ENCODE measurements at regions of chr13 and their contacts with region 1.

Region 1: GRCh38 chr13:30306762-30307193 is 573 bp downstream of the KATNAL1 start:
- DNase-seq: peak; percentile 80 to 94 (median 92)
- ATAC-seq: peak; percentile 86
- H3K4me3 ChIP-seq: peak overlapping the region; percentile 79 to 97
- H3K4me3 Mint-ChIP-seq: peak overlapping the region; percentile 89
- H3K27ac ChIP-seq: peak overlapping the region; percentile 56 to 60
- H3K27ac Mint-ChIP-seq: peak overlapping the region; percentile 79
- H3K4me1 ChIP-seq: peaks cover 5% of the 10 kb centered on the region
- H3K4me1 Mint-ChIP-seq: peaks cover 8% of the 10 kb centered on the region
- H3K27me3 ChIP-seq: no peaks in the 10 kb centered on the region
- H3K27me3 Mint-ChIP-seq: no peaks in the 10 kb centered on the region
- CTCF ChIP-seq: no peak

Region 2: GRCh38 chr13:29589234-29589633 is 717.5 kb before region 1 on chr13:
- CTCF ChIA-PET with region 1: no interaction called
- POLR2A ChIA-PET with region 1: no interaction called
- intact Hi-C with region 1: loop called (anchors 2 to 5 kb)
- DNase-seq: no peak
- ATAC-seq: no peak
- H3K4me3 ChIP-seq: no peak overlapping the region
- H3K4me3 Mint-ChIP-seq: no peak overlapping the region
- H3K27ac ChIP-seq: no peak overlapping the region
- H3K27ac Mint-ChIP-seq: no peak overlapping the region
- H3K4me1 ChIP-seq: peaks cover 7% of the 10 kb centered on the region
- H3K4me1 Mint-ChIP-seq: peaks cover 54% of the 10 kb centered on the region
- H3K27me3 ChIP-seq: no peaks in the 10 kb centered on the region
- H3K27me3 Mint-ChIP-seq: no peaks in the 10 kb centered on the region
- CTCF ChIP-seq: no peak

Region 3: DNA sequence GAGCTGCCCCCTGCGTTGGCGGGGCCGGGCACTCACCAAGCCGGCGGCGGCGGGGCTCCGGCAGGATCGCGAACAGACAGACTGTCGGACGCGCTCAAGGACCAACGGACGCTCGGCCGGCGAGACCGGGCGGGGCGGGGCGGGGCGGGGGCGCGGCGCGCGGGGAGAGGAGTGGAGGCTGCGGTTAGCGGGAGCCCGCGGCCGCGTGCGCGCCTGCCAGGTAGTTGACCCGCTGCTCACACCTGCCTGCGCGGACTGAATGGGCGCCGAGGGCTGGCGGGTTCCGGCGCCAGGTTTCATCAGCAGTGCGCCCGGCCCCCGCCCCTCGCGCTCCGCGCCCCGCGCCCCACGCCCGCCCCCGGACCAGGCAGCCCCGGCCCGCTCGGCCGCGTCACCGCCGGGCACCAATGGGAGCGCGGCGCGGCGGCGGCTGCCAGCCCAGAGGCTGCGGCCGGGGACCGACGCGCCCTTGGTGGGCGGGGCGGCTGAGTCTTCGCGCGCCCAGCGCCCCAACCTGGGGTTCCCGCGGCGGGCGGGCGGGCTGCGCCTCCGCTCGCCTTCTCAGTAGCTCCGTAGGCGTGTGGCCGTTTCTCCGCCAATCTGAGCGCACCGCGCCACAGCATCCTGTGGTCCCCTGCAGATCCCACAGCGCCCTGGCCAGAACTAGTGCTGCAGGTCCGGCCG is 711.3 kb before region 1 on chr13 and contains the start of gene SLC7A1:
- CTCF ChIA-PET with region 1: no interaction called
- POLR2A ChIA-PET with region 1: no interaction called
- intact Hi-C with region 1: loop called in 1 of 2 experiments (anchors 2 kb)
- DNase-seq: peak; percentile 67 to 93 (median 79)
- ATAC-seq: peak; percentile 88
- H3K4me3 ChIP-seq: peak within 1 kb of the TSS; percentile 61 to 74
- H3K4me3 Mint-ChIP-seq: peak within 1 kb of the TSS; percentile 90
- H3K27ac ChIP-seq: peak within 1 kb of the TSS; percentile 63 to 73
- H3K27ac Mint-ChIP-seq: peak within 1 kb of the TSS; percentile 85
- H3K4me1 ChIP-seq: peaks cover 15% of the 10 kb centered on the region
- H3K4me1 Mint-ChIP-seq: peaks cover 36% of the 10 kb centered on the region
- H3K27me3 ChIP-seq: no peaks in the 10 kb centered on the region
- H3K27me3 Mint-ChIP-seq: no peaks in the 10 kb centered on the region
- CTCF ChIP-seq: no peak
- total RNA-seq, gene SLC7A1: 15.2 to 18.4 TPM

Region 4: GRCh38 chr13:30346153-30346788 is 39.5 kb after region 1 on chr13:
- CTCF ChIA-PET with region 1: interaction called, 3 read pairs
- POLR2A ChIA-PET with region 1: interaction called, 4 read pairs
- intact Hi-C with region 1: loop called in 1 of 2 experiments (anchors 2 kb)
- DNase-seq: peak; percentile 38 to 84 (median 65)
- ATAC-seq: peak; percentile 92
- H3K4me3 ChIP-seq: no peak overlapping the region
- H3K4me3 Mint-ChIP-seq: peak overlapping the region; percentile 38
- H3K27ac ChIP-seq: no peak overlapping the region
- H3K27ac Mint-ChIP-seq: peak overlapping the region; percentile 7
- H3K4me1 ChIP-seq: peaks cover 37% of the 10 kb centered on the region
- H3K4me1 Mint-ChIP-seq: peaks cover 40% of the 10 kb centered on the region
- H3K27me3 ChIP-seq: no peaks in the 10 kb centered on the region
- H3K27me3 Mint-ChIP-seq: no peaks in the 10 kb centered on the region
- CTCF ChIP-seq: no peak

Region 5: DNA sequence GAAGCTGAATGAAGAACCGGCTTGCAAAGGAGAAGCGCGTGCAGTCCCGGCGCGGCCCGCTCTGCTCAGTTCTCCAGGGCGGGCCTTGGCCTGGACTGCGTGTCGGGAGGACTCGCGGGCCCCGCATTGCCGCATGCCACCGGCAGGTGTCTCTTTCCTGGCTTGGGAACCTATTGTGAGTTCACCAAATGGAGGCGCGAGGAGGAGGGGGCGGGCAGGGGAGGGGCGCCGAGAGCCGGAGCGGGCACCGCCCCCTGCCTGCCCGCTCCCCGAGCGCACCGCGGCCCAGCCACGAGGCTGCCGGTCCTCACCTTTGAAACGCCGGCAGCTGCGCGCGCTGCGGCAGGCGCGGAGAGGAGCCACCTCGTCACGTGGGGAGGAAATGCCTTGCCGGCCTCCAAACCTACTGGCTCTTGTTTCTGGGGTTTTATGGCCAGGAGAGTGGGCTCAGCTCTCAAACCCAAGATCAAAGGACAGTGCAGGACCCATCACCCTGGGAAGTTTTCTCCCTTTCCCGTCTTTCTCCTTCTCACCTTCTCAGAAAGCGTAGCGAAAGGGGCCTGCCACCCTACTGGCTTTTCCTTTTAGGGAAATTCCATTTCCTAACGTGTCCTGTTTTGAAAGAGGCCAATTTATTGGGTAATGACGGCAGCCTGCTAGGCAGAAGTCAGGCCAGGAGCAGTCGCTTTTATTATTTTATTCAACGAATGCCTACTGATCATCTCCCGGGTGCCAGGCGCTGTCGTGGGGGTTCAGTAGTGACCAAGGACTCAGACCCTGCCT is 101.7 kb after region 1 on chr13:
- CTCF ChIA-PET with region 1: no interaction called
- POLR2A ChIA-PET with region 1: no interaction called
- intact Hi-C with region 1: loop called (anchors 1 to 5 kb)
- DNase-seq: peak; percentile 82 to 94 (median 90)
- ATAC-seq: peak; percentile 94
- H3K4me3 ChIP-seq: peak overlapping the region; percentile 31 to 39
- H3K4me3 Mint-ChIP-seq: peak overlapping the region; percentile 72
- H3K27ac ChIP-seq: peak overlapping the region in 1 of 2 experiments; percentile 67
- H3K27ac Mint-ChIP-seq: peak overlapping the region; percentile 86
- H3K4me1 ChIP-seq: peaks cover 14% of the 10 kb centered on the region
- H3K4me1 Mint-ChIP-seq: peaks cover 27% of the 10 kb centered on the region
- H3K27me3 ChIP-seq: no peaks in the 10 kb centered on the region
- H3K27me3 Mint-ChIP-seq: no peaks in the 10 kb centered on the region
- CTCF ChIP-seq: peak; percentile 74

Region 6: DNA sequence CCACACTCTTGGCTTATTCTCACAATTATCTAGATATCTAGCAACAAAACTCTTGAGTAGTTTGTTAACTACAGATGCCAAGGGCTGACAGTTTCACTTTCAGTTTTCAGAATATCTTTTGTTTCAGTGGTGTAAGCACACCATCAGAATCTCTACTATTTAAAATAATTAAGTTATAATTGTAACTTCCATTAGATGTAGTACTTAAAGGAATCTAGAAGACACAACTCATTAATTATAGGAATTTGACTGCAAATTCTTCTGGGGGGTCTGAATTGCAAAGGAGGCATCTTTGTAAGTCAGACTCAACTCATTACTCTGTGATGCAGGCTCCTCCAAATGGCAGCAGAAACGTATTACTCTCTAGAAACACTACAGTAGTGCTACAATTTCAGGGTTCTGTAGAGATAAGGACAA is 266.1 kb after region 1 on chr13:
- CTCF ChIA-PET with region 1: no interaction called
- POLR2A ChIA-PET with region 1: no interaction called
- intact Hi-C with region 1: loop called (anchors 5 kb)
- DNase-seq: peak in 4 of 9 experiments; percentile 12 to 72 (median 40)
- ATAC-seq: peak; percentile 57
- H3K4me3 ChIP-seq: peak overlapping the region; percentile 23 to 51
- H3K4me3 Mint-ChIP-seq: peak overlapping the region; percentile 75
- H3K27ac ChIP-seq: peak overlapping the region; percentile 58 to 72
- H3K27ac Mint-ChIP-seq: peak overlapping the region; percentile 91
- H3K4me1 ChIP-seq: peaks cover 27% of the 10 kb centered on the region
- H3K4me1 Mint-ChIP-seq: peaks cover 32% of the 10 kb centered on the region
- H3K27me3 ChIP-seq: no peaks in the 10 kb centered on the region
- H3K27me3 Mint-ChIP-seq: no peaks in the 10 kb centered on the region
- CTCF ChIP-seq: peak; percentile 44

Region 7: DNA sequence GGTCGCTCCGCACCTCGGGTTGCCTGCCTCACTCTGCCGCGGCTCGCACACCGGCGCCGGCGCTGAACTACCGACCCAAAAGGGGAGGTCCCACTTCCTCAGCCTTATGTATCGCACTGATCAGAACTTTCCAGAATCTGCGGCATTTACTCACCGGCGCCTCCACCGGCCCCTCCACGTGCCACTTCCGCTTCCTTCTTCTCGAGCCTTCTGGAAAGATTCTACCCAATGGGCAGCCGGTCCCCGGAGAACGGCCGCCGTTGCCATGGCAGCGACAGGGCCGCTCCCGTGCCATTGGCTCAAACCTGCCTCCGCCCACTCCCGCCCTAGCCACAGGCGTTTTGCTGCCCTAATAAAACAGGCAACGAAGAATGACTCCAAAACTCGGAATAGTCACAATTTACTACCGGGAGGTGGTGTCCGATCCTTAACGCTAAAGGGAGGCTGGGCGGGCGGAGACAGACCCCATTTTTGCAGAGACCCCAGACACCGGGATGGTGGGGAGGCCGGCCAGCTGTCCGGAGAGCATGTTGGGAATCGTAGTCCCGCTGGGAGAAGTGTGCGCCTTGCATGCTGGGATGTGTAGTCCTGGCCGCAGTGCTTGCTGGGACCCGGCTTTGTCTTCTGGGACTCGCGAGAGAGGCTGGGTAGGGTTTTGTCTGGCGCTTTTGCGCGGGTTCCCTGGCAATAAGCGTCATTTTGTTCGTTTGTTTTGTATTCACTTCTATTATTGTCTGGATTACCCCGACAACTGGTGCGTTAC is 855.2 kb after region 1 on chr13 and contains the start of gene HSPH1:
- CTCF ChIA-PET with region 1: no interaction called
- POLR2A ChIA-PET with region 1: no interaction called
- intact Hi-C with region 1: loop called (anchors 2 to 5 kb)
- DNase-seq: peak; percentile 96 to 99 (median 98)
- ATAC-seq: peak; percentile 83
- H3K4me3 ChIP-seq: peak within 1 kb of the TSS; percentile 76 to 95
- H3K4me3 Mint-ChIP-seq: peak within 1 kb of the TSS; percentile 95
- H3K27ac ChIP-seq: peak within 1 kb of the TSS; percentile 98
- H3K27ac Mint-ChIP-seq: peak within 1 kb of the TSS; percentile 98
- H3K4me1 ChIP-seq: peaks cover 25% of the 10 kb centered on the region
- H3K4me1 Mint-ChIP-seq: peaks cover 43% of the 10 kb centered on the region
- H3K27me3 ChIP-seq: no peaks in the 10 kb centered on the region
- H3K27me3 Mint-ChIP-seq: no peaks in the 10 kb centered on the region
- CTCF ChIP-seq: no peak
- total RNA-seq, gene HSPH1: 189 to 199 TPM